H1 (cell line): ENCODE measurements at regions of chr17 and their contacts with region 1.

Region 1: GRCh38 chr17:75594499-75595276 is 7.1 kb downstream of the MYO15B start:
- DNase-seq: no peak
- H3K4me3 ChIP-seq: no peak overlapping the region
- H3K27ac ChIP-seq: no peak overlapping the region
- H3K4me1 ChIP-seq: peaks cover 0 to 3% (median under 1%) of the 10 kb centered on the region in 4 experiments; a peak in 2 of 7 replicates
- H3K27me3 ChIP-seq: peaks cover 0 to 5% (median 4%) of the 10 kb centered on the region in 4 experiments; a peak in 4 of 7 replicates
- CTCF ChIP-seq: peak; percentile 18 to 53 (median 31); a peak in 3 of 4 replicates
- EP300 ChIP-seq: no peak
- POLR2A ChIP-seq: no peak
- RAD21 ChIP-seq: peak; percentile 7 to 34; a peak in 1 of 4 replicates

Region 2: GRCh38 chr17:75614006-75614405 is 19.3 kb after region 1 on chr17:
- CTCF ChIA-PET with region 1: interaction called, 2,200 read pairs
- POLR2A ChIA-PET with region 1: interaction called, 5 read pairs
- DNase-seq: no peak
- H3K4me3 ChIP-seq: no peak overlapping the region
- H3K27ac ChIP-seq: no peak overlapping the region
- H3K4me1 ChIP-seq: no peaks in the 10 kb centered on the region
- H3K27me3 ChIP-seq: no peaks in the 10 kb centered on the region
- CTCF ChIP-seq: peak; percentile 55 to 64 (median 59)
- EP300 ChIP-seq: no peak
- POLR2A ChIP-seq: no peak
- RAD21 ChIP-seq: peak; percentile 31 to 47; a peak in 3 of 4 replicates